ENCODE measurements at regions of chr10 and their contacts with region 1.

Region 1: GRCh38 chr10:98045785-98046389 is 15.5 kb upstream of the CRTAC1 start:
- DNase-seq: peak; percentile 31
- H3K4me3 ChIP-seq: no peak overlapping the region
- H3K27ac ChIP-seq: no peak overlapping the region
- H3K4me1 ChIP-seq: no peaks in the 10 kb centered on the region
- H3K27me3 ChIP-seq: no peaks in the 10 kb centered on the region
- CTCF ChIP-seq: peak; percentile 46 to 76 (median 68)
- POLR2A ChIP-seq: no peak

Region 2: GRCh38 chr10:97623277-97623676 is 422.6 kb before region 1 on chr10:
- intact Hi-C with region 1: no loop called
- DNase-seq: no peak
- H3K4me3 ChIP-seq: no peak overlapping the region
- H3K27ac ChIP-seq: no peak overlapping the region
- H3K4me1 ChIP-seq: no peaks in the 10 kb centered on the region
- H3K27me3 ChIP-seq: no peaks in the 10 kb centered on the region
- CTCF ChIP-seq: no peak
- POLR2A ChIP-seq: no peak

Region 3: DNA sequence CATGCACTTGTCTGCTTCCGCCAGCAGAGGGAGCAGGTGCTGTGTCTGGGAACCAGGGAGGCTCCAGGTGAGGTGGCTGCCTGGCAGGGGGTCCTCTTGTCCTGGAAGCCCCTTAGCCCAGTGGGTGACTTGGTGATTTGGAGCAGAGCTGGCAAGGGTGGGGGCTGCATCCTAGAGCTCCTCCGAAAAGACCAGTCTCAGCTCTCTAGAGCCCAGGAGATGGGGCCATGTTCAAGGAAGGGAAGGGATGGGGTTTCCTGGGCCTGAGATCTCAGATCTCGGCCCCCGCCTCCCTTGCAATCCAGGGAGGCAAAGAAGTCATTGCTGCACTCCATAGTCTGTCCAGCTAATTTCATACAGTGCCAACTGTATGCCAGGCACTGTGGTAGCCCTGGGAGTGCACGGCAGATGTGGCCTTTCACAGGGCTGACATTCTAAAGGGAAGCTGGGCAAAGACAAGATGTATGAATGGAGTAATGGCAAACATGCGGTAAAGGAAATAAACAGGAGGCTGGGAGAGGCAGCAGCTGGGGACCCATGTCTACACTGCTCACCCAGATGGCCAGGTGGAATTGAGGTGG is 253.7 kb before region 1 on chr10:
- intact Hi-C with region 1: loop called (anchors 10 kb)
- DNase-seq: peak; percentile 63
- H3K4me3 ChIP-seq: no peak overlapping the region
- H3K27ac ChIP-seq: no peak overlapping the region
- H3K4me1 ChIP-seq: no peaks in the 10 kb centered on the region
- H3K27me3 ChIP-seq: peaks cover 5% of the 10 kb centered on the region
- CTCF ChIP-seq: peak; percentile 70 to 87 (median 78)
- POLR2A ChIP-seq: no peak

Region 4: DNA sequence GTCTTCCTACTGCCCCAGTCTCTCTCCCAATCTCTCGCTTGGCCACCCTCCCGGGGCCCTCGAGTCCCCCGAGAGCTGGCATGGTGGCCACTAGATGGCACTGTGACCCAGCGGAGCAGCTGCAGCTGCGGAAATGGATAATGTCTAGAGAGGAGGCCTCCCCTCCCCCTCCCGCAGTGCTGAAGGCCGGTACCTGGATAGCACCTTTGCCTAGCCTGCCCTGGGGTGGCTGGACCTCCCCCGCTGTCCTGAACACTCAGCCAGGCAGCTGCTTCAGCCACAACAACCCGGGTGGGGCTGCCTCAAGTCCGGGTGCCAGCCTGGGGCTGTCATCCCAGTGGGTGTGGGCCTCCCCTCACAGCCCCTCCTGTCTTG is 131.1 kb before region 1 on chr10:
- intact Hi-C with region 1: loop called (anchors 2 kb)
- DNase-seq: peak; percentile 77
- H3K4me3 ChIP-seq: no peak overlapping the region
- H3K27ac ChIP-seq: no peak overlapping the region
- H3K4me1 ChIP-seq: no peaks in the 10 kb centered on the region
- H3K27me3 ChIP-seq: no peaks in the 10 kb centered on the region
- CTCF ChIP-seq: peak; percentile 83 to 91 (median 90)
- POLR2A ChIP-seq: no peak